Body of pancreas (tissue), 4 donors: ENCODE measurements at regions of chr11 and their contacts with region 1.

Region 1: DNA sequence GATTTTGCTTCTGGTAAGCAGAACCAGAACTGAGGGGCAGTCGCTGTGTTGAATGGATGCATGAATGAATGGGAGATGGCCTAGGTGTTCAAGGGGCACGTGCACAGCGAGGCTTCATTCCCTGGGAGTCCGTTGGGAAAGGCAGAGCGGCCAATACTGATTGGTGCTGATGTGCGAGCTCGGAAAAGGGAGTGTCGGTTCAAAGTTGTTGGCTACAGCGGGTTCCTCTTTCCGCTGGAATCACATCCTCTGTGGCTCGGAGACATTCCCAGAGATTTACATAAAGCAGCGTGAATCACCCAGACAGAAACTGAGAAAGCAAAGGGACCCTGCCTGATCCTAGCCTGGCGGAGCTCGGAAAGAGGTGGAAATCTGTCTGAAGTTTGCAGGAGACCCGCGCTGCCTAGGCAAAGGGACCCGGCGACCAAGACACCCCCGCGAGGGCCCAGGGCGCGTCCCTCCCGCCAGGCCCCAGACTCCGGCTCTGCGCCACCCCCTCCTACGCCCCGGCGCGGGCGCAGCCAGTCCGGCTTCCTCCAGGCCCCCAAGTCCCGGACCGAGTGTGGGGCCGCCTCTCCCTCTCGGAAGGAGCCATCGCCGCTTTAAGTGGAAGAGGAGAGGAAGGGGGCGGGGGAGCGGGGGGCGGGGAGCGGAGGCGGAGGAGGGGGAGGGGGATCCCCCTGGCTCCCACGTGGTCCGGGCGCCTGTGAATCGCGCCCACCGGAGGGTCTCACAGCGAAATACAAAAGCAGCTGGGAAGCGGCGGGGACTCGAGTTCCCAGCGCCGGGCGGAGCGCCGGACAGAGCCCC is at the start of gene FJX1:
- DNase-seq: peak; percentile 40 to 51 (median 50)
- ATAC-seq: peak; percentile 36
- H3K4me3 ChIP-seq: peak within 1 kb of the TSS; percentile 13 to 26
- H3K27ac ChIP-seq: peak within 1 kb of the TSS in 3 of 4 donors; percentile 58 to 70 (median 69)
- H3K4me1 ChIP-seq: peaks cover 38% of the 10 kb centered on the region
- H3K27me3 ChIP-seq: no peaks in the 10 kb centered on the region
- CTCF ChIP-seq: no peak
- POLR2A ChIP-seq: peak in 1 of 3 donors; percentile 21
- total RNA-seq, gene FJX1: 4.2 to 17.1 TPM

Region 2: GRCh38 chr11:35654711-35655110 is 36.8 kb after region 1 on chr11:
- intact Hi-C with region 1: no loop called
- DNase-seq: no peak
- ATAC-seq: no peak
- H3K4me3 ChIP-seq: no peak overlapping the region
- H3K27ac ChIP-seq: no peak overlapping the region
- H3K4me1 ChIP-seq: no peaks in the 10 kb centered on the region
- H3K27me3 ChIP-seq: no peaks in the 10 kb centered on the region
- CTCF ChIP-seq: no peak
- POLR2A ChIP-seq: no peak

Region 3: GRCh38 chr11:35664977-35665441 is 47.1 kb after region 1 on chr11:
- intact Hi-C with region 1: no loop called
- DNase-seq: no peak
- ATAC-seq: no peak
- H3K4me3 ChIP-seq: no peak overlapping the region
- H3K27ac ChIP-seq: no peak overlapping the region
- H3K4me1 ChIP-seq: peaks cover 25% of the 10 kb centered on the region
- H3K27me3 ChIP-seq: no peaks in the 10 kb centered on the region
- CTCF ChIP-seq: no peak
- POLR2A ChIP-seq: no peak

Region 4: DNA sequence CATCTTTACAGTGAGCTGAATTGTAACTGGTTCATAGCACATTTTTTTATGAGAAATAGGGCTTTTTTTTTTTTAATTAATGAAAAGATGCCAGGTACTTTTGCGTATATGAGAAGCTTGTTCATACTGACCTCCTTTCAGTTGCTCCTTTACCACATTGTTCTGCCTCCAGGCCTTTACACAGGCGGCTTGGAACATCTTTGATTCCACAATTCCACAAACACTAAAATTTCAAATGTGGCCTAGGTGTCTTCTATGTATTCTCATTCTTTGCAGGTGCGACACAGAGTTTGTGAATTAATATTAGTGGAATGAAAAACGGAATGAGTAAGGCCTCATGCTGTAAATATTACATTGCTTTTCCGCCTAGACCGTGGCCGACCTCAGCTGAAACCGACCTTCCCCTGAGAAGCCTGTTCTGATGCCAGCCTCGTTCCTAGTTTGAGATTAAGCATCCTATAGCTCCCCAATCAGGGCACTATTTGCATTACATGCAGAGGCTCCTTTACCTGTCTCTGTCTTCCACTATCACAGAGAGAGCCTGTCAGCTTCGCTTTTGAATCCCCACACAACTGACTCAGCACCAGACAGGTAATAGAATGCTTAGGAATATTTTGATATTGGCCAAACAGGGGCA is 451.8 kb after region 1 on chr11:
- intact Hi-C with region 1: no loop called
- DNase-seq: no peak
- ATAC-seq: no peak
- H3K4me3 ChIP-seq: no peak overlapping the region
- H3K27ac ChIP-seq: no peak overlapping the region
- H3K4me1 ChIP-seq: peaks cover 11% of the 10 kb centered on the region
- H3K27me3 ChIP-seq: no peaks in the 10 kb centered on the region
- CTCF ChIP-seq: peak in 2 of 7 experiments; percentile 5 to 12
- POLR2A ChIP-seq: no peak

Region 5: DNA sequence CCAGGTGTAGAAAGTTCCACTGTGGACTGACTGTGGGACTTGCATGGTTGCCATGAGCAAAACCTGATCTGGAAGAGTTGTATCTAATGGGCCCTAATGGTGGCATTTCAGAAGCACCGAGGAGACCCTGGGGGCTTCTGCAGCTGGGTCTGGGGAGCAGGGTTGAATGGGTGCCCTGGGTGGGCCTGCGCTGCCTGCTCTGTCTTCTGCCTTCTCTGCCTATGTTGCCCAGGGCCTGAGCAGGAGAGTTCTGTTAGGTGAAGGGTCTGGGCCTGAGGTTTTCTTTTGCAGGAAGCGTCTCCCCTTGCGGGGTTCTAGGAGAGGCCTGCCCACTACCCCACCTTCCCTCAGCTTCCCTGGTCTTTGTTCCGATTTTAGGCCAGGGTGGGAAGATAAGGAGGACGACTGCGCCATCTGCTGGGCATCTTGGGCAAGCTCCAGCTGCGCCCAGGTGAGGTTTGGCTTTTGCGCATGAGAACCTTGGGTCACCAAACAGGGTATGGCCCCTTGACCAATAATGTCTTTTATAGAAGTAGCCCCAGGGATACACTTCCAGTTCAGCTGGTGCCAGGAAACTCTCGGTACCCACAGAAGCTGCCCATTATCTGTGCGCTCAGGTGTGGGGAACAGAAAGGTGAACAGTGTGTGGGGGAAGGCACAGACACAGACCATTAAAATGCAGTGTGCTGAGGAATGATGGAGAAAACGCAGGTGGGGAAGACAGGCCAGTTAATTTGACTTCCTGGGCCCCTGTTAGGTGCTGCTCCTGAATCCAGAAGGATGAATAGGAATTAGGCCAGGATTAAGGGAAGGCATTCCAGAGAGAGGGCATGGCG is 648.1 kb after region 1 on chr11:
- intact Hi-C with region 1: loop called (anchors 5 kb)
- DNase-seq: peak; percentile 61 to 72 (median 66)
- ATAC-seq: peak; percentile 77
- H3K4me3 ChIP-seq: no peak overlapping the region
- H3K27ac ChIP-seq: peak overlapping the region in 2 of 4 donors; percentile 10 to 34
- H3K4me1 ChIP-seq: peaks cover 36% of the 10 kb centered on the region
- H3K27me3 ChIP-seq: no peaks in the 10 kb centered on the region
- CTCF ChIP-seq: peak; percentile 71 to 86 (median 81)
- POLR2A ChIP-seq: no peak

Region 6: GRCh38 chr11:36488096-36488495 is 870.2 kb after region 1 on chr11:
- intact Hi-C with region 1: loop called (anchors 10 kb)
- DNase-seq: no peak
- ATAC-seq: no peak
- H3K4me3 ChIP-seq: no peak overlapping the region
- H3K27ac ChIP-seq: no peak overlapping the region
- H3K4me1 ChIP-seq: no peaks in the 10 kb centered on the region
- H3K27me3 ChIP-seq: no peaks in the 10 kb centered on the region
- CTCF ChIP-seq: no peak
- POLR2A ChIP-seq: no peak